PC-3 (cell line): ENCODE measurements at regions of chr12 and their contacts with region 1.

Region 1: GRCh38 chr12:79547735-79548609 is 142.8 kb downstream of the PAWR start:
- DNase-seq: peak; percentile 91
- ATAC-seq: peak; percentile 22
- H3K4me3 ChIP-seq: peak overlapping the region; percentile 47
- H3K27ac ChIP-seq: peak overlapping the region; percentile 97
- H3K4me1 ChIP-seq: peaks cover 47% of the 10 kb centered on the region
- H3K27me3 ChIP-seq: no peaks in the 10 kb centered on the region
- CTCF ChIP-seq: peak; percentile 96

Region 2: GRCh38 chr12:79407671-79408622 is 140.0 kb before region 1 on chr12:
- CTCF ChIA-PET with region 1: no interaction called
- POLR2A ChIA-PET with region 1: no interaction called
- intact Hi-C with region 1: loop called (anchors 1 kb)
- DNase-seq: peak; percentile 94
- ATAC-seq: peak; percentile 99
- H3K4me3 ChIP-seq: peak overlapping the region; percentile 24; the same call in 1 of the 2 replicates
- H3K27ac ChIP-seq: peak overlapping the region; percentile 33
- H3K4me1 ChIP-seq: peaks cover 23% of the 10 kb centered on the region
- H3K27me3 ChIP-seq: no peaks in the 10 kb centered on the region
- CTCF ChIP-seq: peak; percentile 97

Region 3: DNA sequence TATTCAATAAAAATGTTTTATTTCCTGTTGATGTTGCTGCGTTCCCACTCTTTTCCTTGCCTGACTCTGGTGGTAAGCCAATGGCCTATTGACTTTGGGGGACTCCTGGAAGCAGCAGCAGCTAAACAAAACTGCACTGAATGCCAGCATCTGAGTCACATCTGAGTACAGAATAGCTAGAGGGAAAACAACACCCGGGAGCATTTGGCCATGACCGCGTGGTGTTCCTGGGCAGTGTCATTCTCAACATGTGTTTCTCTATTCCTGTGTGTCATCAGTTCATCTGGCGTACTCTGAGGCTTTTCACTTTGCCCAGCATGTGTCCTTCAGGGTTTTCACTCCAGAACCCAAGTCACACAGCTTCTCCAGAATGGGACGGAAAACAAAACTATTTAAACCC is 96.0 kb before region 1 on chr12:
- CTCF ChIA-PET with region 1: no interaction called
- POLR2A ChIA-PET with region 1: no interaction called
- intact Hi-C with region 1: loop called (anchors 1 kb)
- DNase-seq: peak; percentile 96
- ATAC-seq: peak; percentile 94
- H3K4me3 ChIP-seq: no peak overlapping the region
- H3K27ac ChIP-seq: peak overlapping the region; percentile 86
- H3K4me1 ChIP-seq: peaks cover 37% of the 10 kb centered on the region
- H3K27me3 ChIP-seq: no peaks in the 10 kb centered on the region
- CTCF ChIP-seq: no peak

Region 4: DNA sequence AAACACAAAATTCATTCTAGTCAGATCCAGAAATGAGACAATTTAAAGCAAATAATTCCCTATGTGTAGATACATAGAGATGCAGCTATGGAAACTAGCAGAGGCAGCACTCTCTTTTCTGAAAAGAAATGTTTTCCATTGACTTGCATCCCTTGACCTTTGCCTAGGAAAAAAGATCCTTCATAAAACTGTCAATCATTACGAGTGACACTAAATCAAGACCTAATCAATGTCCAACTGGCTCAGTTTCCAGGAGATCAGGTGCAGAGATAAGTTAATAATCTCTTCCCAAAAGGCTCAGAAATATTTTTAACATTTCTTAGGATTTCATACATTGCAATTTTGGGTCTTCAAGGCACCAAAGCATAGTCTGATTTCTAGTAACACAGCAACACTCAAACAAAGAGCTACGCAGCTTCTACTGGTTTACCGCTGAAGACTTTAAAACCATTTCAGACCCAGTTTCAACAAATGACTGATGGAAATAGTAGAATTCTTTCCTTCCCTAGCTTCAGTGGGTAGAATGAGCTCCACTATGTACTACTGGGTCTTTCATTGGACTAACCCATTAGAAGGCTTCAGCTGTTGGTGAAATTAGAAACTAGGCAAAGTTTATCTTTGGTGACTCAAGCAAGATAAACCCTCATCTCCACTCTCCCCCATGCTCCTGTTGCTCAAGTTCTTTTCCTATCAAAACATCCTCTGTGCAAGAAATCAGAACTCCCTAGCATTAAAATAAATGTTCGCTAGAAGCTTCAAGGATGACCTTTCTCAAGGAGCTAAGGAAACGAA is 16.7 kb before region 1 on chr12:
- CTCF ChIA-PET with region 1: interaction called, 26 read pairs
- POLR2A ChIA-PET with region 1: interaction called, 11 read pairs
- intact Hi-C with region 1: loop called (anchors 1 kb)
- DNase-seq: peak; percentile 35
- ATAC-seq: no peak
- H3K4me3 ChIP-seq: no peak overlapping the region
- H3K27ac ChIP-seq: no peak overlapping the region
- H3K4me1 ChIP-seq: peaks cover 50% of the 10 kb centered on the region
- H3K27me3 ChIP-seq: no peaks in the 10 kb centered on the region
- CTCF ChIP-seq: no peak

Region 5: GRCh38 chr12:79591988-79592387 is 44.0 kb after region 1 on chr12:
- CTCF ChIA-PET with region 1: no interaction called
- POLR2A ChIA-PET with region 1: no interaction called
- intact Hi-C with region 1: no loop called
- DNase-seq: peak; percentile 28
- ATAC-seq: peak; percentile 59
- H3K4me3 ChIP-seq: no peak overlapping the region
- H3K27ac ChIP-seq: no peak overlapping the region
- H3K4me1 ChIP-seq: no peaks in the 10 kb centered on the region
- H3K27me3 ChIP-seq: no peaks in the 10 kb centered on the region
- CTCF ChIP-seq: no peak

Region 6: DNA sequence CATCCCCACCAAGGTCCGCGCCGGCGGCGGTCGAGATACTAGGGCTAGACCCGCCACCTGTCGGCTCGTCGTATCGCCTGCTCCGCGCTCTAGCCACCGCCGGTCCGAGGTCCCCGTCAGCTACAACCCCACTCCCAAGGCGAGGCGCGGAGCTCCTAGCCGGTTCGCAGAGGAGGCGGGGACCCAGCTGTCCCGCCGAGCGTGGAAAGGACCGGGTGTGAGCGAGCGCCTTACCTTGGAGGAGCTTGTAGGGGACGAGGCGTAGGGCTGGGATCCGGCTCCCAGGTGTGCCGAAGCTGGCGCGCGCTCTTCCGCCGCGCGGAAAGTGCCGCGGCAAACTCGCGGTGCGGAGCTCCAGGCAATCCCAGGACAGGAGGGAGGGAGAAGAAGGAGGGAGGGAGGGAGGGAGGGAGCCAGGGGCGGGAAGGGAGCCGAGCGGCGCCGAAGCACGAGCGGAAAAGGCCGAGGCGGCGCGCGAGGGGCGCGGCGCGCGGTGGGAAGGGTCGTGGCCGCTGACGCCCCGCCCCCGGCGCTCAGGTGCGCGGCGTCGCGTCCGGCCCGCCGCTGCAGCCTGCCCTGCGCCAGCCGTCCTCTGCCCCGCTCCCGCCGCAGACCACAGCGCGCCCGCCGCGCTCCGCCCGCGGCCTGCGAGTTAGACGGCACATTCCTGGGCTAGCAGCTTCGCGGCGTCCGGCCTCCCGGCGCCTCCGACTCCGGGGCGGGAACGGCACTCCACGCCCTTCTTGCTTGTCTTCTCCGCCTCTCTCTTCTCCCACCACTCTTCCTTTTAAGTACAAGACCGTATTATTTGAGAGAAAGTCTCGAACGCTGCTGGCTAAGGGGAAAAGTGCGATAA is 142.9 kb after region 1 on chr12 and contains the start of gene PAWR:
- CTCF ChIA-PET with region 1: no interaction called
- POLR2A ChIA-PET with region 1: interaction called, 12 read pairs
- intact Hi-C with region 1: no loop called
- DNase-seq: peak; percentile 92
- ATAC-seq: peak; percentile 62
- H3K4me3 ChIP-seq: peak within 1 kb of the TSS; percentile 87
- H3K27ac ChIP-seq: peak within 1 kb of the TSS; percentile 82
- H3K4me1 ChIP-seq: peaks cover 38% of the 10 kb centered on the region
- H3K27me3 ChIP-seq: no peaks in the 10 kb centered on the region
- CTCF ChIP-seq: no peak; the same call in 1 of the 2 replicates
- total RNA-seq, gene PAWR: 141 and 214 TPM in 2 replicates